ENCODE measurements at regions of chr12 and their contacts with region 1.

Region 1: DNA sequence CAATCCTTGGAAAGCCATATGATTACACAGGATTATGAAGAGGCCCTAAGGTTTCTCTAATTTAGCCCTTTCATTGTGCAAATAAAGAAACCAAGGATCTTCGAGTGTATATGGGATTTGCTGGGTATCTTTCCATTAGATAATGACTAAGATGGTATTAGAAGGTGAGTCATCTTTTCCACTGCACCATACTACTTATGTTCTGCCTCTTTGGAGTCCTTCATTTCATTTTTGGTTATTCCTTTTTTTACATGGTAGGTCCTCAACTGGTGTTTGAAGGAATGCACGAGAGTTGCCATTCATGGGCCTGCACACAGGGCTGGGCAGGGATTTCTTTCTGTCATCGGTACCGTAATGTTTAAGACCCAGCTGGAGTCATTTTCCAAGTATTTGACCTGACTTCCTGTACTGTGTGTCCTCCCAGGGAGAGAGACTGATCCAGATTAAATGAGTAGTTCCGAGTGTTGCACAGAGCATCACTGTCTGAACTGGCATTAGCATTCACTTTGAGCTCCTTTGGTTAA is 85.7 kb downstream of the BORCS5 start:
- DNase-seq: no peak
- H3K4me3 ChIP-seq: no peak overlapping the region
- H3K4me3 Mint-ChIP-seq: peak overlapping the region in 6 of 8 donors; percentile 8 to 85 (median 70)
- H3K27ac ChIP-seq: peak overlapping the region; percentile 65
- H3K27ac Mint-ChIP-seq: peak overlapping the region; percentile 90 to 99 (median 98)
- H3K4me1 ChIP-seq: peaks cover 95% of the 10 kb centered on the region
- H3K4me1 Mint-ChIP-seq: peaks cover 68 to 93% (median 80%) of the 10 kb centered on the region in 4 donors
- H3K27me3 ChIP-seq: no peaks in the 10 kb centered on the region
- H3K27me3 Mint-ChIP-seq: no peaks in the 10 kb centered on the region

Region 2: DNA sequence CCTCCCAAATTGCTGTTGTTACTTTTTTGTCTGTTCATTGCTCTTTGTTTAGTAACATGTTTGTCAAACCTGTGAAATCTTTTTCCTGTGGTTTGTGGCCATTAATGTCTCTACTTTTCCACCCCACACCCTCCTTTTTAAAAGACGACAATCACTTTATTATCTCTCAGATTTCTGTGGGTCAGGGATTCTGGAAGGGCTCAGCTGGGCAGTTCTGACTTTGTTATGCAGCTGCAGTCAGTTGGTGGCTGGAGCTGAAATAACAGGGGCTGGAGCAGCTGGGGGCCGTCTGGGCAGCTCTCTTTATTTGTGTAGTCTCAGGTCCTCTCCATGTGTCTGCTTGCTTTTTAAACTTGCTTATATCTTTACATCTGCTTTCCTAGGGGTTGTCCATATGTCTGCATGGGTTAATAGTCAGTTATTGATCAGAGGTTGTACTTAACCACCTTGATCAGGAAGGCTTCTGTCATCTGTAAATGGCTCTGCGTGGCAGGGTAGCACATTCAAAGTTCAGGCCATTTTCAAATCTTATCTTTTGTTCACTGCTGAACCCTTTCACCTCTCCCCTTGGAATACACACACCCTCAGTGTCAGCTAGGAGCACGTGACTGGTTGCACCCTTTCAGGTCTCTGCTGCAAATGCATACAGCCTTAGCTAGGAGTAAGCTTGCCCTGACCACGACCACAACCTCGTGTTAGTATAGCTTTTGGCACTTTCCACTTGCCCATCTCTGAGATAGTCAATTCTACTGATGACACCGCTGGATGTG is 57.9 kb before region 1 on chr12:
- CTCF ChIA-PET with region 1: interaction called, 10 read pairs
- POLR2A ChIA-PET with region 1: interaction called, 32 read pairs
- intact Hi-C with region 1: loop called (anchors 2 kb)
- DNase-seq: peak in 4 of 5 donors; percentile 46 to 48 (median 47)
- H3K4me3 ChIP-seq: peak overlapping the region in 1 of 2 donors; percentile 9
- H3K4me3 Mint-ChIP-seq: peak overlapping the region; percentile 59 to 85 (median 74)
- H3K27ac ChIP-seq: peak overlapping the region; percentile 50
- H3K27ac Mint-ChIP-seq: peak overlapping the region; percentile 86 to 99 (median 96)
- H3K4me1 ChIP-seq: peaks cover 87% of the 10 kb centered on the region
- H3K4me1 Mint-ChIP-seq: peaks cover 46 to 87% (median 68%) of the 10 kb centered on the region in 4 donors
- H3K27me3 ChIP-seq: no peaks in the 10 kb centered on the region
- H3K27me3 Mint-ChIP-seq: no peaks in the 10 kb centered on the region

Region 3: DNA sequence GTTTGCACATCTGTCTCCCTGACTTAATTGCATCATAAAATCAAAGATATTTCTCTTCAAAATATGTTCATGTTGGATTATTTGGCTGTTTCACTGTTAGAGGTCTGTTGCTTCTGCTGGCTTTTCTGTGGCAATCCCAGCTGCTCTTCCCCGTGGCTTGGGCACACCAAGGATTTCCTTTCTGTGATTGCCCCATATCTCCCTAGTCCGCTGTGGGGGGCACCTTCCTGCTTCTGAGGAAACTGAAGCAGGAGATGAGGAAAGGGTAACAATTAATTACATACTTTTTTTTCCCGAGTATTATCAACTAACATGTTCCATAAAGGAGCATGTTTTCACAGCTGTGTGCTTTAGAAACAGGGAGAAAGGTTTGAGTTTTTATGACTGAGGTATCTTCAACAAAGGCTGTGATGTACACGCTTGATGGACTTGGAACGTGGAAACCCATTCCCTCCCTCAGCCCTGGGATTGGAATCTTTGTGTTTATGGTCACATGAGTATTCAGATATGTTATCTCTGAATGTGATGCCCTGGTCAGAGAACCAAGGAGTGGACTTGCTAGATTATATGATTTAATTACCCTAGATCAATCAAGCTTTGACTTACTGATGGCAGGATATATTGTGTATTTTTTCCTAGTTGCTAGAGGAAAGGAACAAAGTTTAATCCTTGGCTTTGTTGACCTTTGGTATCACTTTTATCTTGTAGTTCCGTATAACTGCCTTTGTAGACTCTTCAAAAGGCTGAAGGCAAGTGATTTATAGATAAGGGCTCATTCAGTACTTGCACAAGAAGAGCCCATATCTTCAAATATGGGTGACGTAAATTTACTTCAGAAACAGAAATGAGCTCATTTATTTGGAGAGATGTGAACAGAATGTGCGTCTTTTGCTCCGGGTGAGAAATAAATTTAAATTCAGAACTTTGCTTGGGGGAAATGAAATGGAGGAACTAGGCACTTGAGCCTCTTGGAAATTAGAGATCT is 39.1 kb before region 1 on chr12:
- CTCF ChIA-PET with region 1: no interaction called
- POLR2A ChIA-PET with region 1: interaction called, 3 read pairs
- intact Hi-C with region 1: loop called (anchors 5 kb)
- DNase-seq: peak in 3 of 5 donors; percentile 23 to 50 (median 42)
- H3K4me3 ChIP-seq: no peak overlapping the region
- H3K4me3 Mint-ChIP-seq: peak overlapping the region in 4 of 8 donors; percentile 8 to 55 (median 20)
- H3K27ac ChIP-seq: no peak overlapping the region
- H3K27ac Mint-ChIP-seq: peak overlapping the region; percentile 55 to 93 (median 86)
- H3K4me1 ChIP-seq: peaks cover 39% of the 10 kb centered on the region
- H3K4me1 Mint-ChIP-seq: peaks cover 25 to 65% (median 45%) of the 10 kb centered on the region in 4 donors
- H3K27me3 ChIP-seq: no peaks in the 10 kb centered on the region
- H3K27me3 Mint-ChIP-seq: no peaks in the 10 kb centered on the region

Region 4: GRCh38 chr12:12432364-12432763 is 10.2 kb before region 1 on chr12:
- CTCF ChIA-PET with region 1: interaction called, 5 read pairs
- POLR2A ChIA-PET with region 1: interaction called, 31 read pairs
- intact Hi-C with region 1: no loop called
- DNase-seq: no peak
- H3K4me3 ChIP-seq: no peak overlapping the region
- H3K4me3 Mint-ChIP-seq: peak overlapping the region in 6 of 8 donors; percentile 6 to 82 (median 45)
- H3K27ac ChIP-seq: no peak overlapping the region
- H3K27ac Mint-ChIP-seq: peak overlapping the region in 5 of 7 donors; percentile 15 to 84 (median 60)
- H3K4me1 ChIP-seq: peaks cover 59% of the 10 kb centered on the region
- H3K4me1 Mint-ChIP-seq: peaks cover 45 to 90% (median 56%) of the 10 kb centered on the region in 4 donors
- H3K27me3 ChIP-seq: no peaks in the 10 kb centered on the region
- H3K27me3 Mint-ChIP-seq: no peaks in the 10 kb centered on the region

Region 5: DNA sequence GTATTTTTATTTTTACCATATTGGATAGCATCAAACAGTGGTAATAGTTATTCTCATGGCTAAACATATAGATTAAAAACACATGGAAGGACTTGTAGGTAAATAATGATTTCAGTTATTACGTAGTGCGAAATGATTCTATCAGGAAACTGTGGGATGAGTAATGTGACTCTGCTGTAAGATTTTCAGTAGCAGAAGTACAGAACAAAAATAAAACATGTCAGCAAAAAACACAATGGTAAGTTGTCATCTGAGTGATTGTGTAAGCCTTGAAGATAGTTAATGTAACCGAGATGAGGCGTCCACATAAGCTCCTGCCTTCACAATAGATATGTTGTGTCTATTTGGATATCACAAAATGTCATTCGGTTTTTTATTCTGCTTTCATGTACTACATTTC is 14.0 kb after region 1 on chr12:
- CTCF ChIA-PET with region 1: interaction called, 24 read pairs
- POLR2A ChIA-PET with region 1: interaction called, 252 read pairs
- intact Hi-C with region 1: loop called (anchors 1 kb)
- DNase-seq: peak in 4 of 5 donors; percentile 54 to 72 (median 54)
- H3K4me3 ChIP-seq: peak overlapping the region in 1 of 2 donors; percentile 27
- H3K4me3 Mint-ChIP-seq: peak overlapping the region; percentile 23 to 78 (median 66)
- H3K27ac ChIP-seq: peak overlapping the region; percentile 65
- H3K27ac Mint-ChIP-seq: peak overlapping the region; percentile 78 to 97 (median 92)
- H3K4me1 ChIP-seq: peaks cover 40% of the 10 kb centered on the region
- H3K4me1 Mint-ChIP-seq: peaks cover 21 to 60% (median 45%) of the 10 kb centered on the region in 4 donors
- H3K27me3 ChIP-seq: no peaks in the 10 kb centered on the region
- H3K27me3 Mint-ChIP-seq: no peaks in the 10 kb centered on the region

Region 6: GRCh38 chr12:12724661-12725545 is 282.3 kb after region 1 on chr12:
- CTCF ChIA-PET with region 1: interaction called, 3 read pairs
- POLR2A ChIA-PET with region 1: interaction called, 14 read pairs
- intact Hi-C with region 1: no loop called
- DNase-seq: peak; percentile 93 to 97 (median 96)
- H3K4me3 ChIP-seq: peak overlapping the region in 1 of 2 donors; percentile 80
- H3K4me3 Mint-ChIP-seq: peak overlapping the region; percentile 89 to 96 (median 92)
- H3K27ac ChIP-seq: peak overlapping the region; percentile 95
- H3K27ac Mint-ChIP-seq: peak overlapping the region; percentile 95 to 99 (median 97)
- H3K4me1 ChIP-seq: peaks cover 56% of the 10 kb centered on the region
- H3K4me1 Mint-ChIP-seq: peaks cover 37 to 72% (median 43%) of the 10 kb centered on the region in 4 donors
- H3K27me3 ChIP-seq: no peaks in the 10 kb centered on the region
- H3K27me3 Mint-ChIP-seq: peaks cover 0 to 1% of the 10 kb centered on the region in 2 donors

Region 7: DNA sequence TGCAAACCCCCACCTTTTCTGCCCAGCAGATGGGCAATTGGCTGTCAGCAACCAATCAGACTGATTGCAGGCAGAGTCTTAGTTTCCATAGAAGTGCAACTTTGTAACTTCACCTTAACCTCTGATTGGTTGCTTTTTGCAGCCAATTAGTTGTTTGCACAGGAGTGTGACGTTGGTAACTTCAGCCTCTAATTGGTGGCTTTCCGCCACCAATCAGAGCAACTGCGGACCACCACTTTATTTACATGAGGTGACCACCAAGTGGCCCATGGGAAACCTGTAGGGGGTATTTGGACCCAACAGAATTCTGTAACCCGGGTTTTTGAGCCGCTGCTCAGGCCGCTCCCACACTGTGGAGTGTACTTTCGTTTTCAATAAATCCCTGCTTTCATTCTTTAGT is 306.8 kb after region 1 on chr12:
- CTCF ChIA-PET with region 1: no interaction called
- POLR2A ChIA-PET with region 1: no interaction called
- intact Hi-C with region 1: no loop called
- DNase-seq: no peak
- H3K4me3 ChIP-seq: no peak overlapping the region
- H3K4me3 Mint-ChIP-seq: no peak overlapping the region
- H3K27ac ChIP-seq: no peak overlapping the region
- H3K27ac Mint-ChIP-seq: no peak overlapping the region
- H3K4me1 ChIP-seq: no peaks in the 10 kb centered on the region
- H3K4me1 Mint-ChIP-seq: peaks cover 0 to 8% (median 1%) of the 10 kb centered on the region in 4 donors
- H3K27me3 ChIP-seq: no peaks in the 10 kb centered on the region
- H3K27me3 Mint-ChIP-seq: no peaks in the 10 kb centered on the region

Measured in CD4-positive, alpha-beta memory T cell (primary cell).